Activated naive CD4-positive, alpha-beta T cell treated with anti-CD3 and anti-CD28 coated beads for 36 hours (primary cell): ENCODE measurements at regions of chr1 and their contacts with region 1.

Region 1: GRCh38 chr1:42943169-42943568 is 15.5 kb downstream of the SLC2A1 start:
- DNase-seq: peak; percentile 42
- H3K4me3 Mint-ChIP-seq: no peak overlapping the region
- H3K27ac Mint-ChIP-seq: peak overlapping the region; percentile 72
- H3K4me1 Mint-ChIP-seq: peaks cover 95% of the 10 kb centered on the region
- H3K27me3 Mint-ChIP-seq: no peaks in the 10 kb centered on the region

Region 2: DNA sequence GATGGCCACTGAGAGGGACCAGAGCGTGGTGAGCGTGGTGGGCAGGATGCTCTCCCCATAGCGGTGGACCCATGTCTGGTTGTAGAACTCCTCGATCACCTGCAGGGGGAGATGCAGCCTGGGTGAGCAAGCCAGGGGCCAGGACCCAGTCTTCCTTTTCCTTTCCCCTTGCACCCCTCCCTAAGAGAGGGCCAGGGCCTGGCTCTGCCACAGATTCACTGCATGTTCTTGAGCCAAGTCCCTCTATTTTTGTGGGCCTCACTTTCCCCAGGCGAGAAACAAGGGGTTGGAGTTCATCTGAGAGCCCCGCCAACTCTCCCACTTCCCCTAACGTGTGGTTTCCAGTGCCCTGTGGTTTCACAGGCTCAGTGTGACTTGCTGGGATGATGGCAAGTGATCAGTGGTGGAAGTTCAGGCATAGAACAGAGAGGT is 12.0 kb before region 1 on chr1:
- CTCF ChIA-PET with region 1: no interaction called
- intact Hi-C with region 1: loop called (anchors 1 kb)
- DNase-seq: peak; percentile 65
- H3K4me3 Mint-ChIP-seq: peak overlapping the region; percentile 60
- H3K27ac Mint-ChIP-seq: peak overlapping the region; percentile 97
- H3K4me1 Mint-ChIP-seq: peaks cover 57% of the 10 kb centered on the region
- H3K27me3 Mint-ChIP-seq: no peaks in the 10 kb centered on the region